Caco-2 (cell line): ENCODE measurements at regions of chr7 and their contacts with region 1.

Region 1: GRCh38 chr7:17559388-17559787 is 260.9 kb downstream of the AHR start:
- DNase-seq: no peak
- H3K4me3 ChIP-seq: no peak overlapping the region
- H3K4me3 Mint-ChIP-seq: peak overlapping the region; percentile 6
- H3K27ac Mint-ChIP-seq: peak overlapping the region; percentile 67
- H3K4me1 ChIP-seq: peaks cover 23% of the 10 kb centered on the region
- H3K4me1 Mint-ChIP-seq: peaks cover 24% of the 10 kb centered on the region
- H3K27me3 ChIP-seq: no peaks in the 10 kb centered on the region
- H3K27me3 Mint-ChIP-seq: no peaks in the 10 kb centered on the region
- CTCF ChIP-seq: no peak

Region 2: GRCh38 chr7:17548014-17548653 is 11.3 kb before region 1 on chr7:
- CTCF ChIA-PET with region 1: no interaction called
- POLR2A ChIA-PET with region 1: no interaction called
- intact Hi-C with region 1: loop called (anchors 1 kb)
- DNase-seq: peak in 1 of 2 experiments; percentile 22
- H3K4me3 ChIP-seq: no peak overlapping the region
- H3K4me3 Mint-ChIP-seq: no peak overlapping the region
- H3K27ac Mint-ChIP-seq: no peak overlapping the region
- H3K4me1 ChIP-seq: 0 out of 2 replicates have a peak, but pooled peaks cover under 1% of the 10 kb centered on the region
- H3K4me1 Mint-ChIP-seq: peaks cover 12% of the 10 kb centered on the region
- H3K27me3 ChIP-seq: no peaks in the 10 kb centered on the region
- H3K27me3 Mint-ChIP-seq: no peaks in the 10 kb centered on the region
- CTCF ChIP-seq: peak; percentile 7 to 43

Region 3: DNA sequence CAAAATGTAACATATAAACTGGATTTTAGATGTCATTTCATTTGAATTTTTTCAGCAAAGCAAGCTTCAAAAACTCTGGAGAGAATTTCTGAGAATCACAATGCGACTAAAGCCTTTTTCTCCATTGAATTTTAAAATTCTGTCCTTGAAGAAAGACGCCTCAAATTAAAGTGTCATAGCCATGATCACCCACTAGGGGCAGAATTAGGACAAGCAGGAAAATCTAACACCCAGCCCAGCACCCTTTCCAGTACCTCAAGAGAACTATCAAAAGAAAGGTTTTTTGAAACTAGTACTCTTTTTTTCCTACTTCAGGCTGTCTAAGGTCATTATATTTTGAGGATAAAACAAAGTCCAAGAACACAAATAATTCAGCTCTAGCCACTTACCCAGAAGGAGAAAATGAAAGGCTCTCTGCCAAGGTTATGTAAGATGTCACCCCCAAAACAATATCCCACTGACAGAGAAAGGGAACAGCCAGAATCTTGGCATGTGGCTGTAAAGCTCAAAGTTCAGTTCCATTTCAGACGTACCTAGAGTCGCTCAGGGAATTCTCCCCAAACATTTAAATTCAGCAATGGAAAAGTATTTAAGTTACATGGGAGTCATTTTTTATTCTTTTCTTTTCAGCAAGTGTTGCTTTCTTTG is 81.5 kb after region 1 on chr7:
- CTCF ChIA-PET with region 1: no interaction called
- POLR2A ChIA-PET with region 1: no interaction called
- intact Hi-C with region 1: loop called (anchors 1 kb)
- DNase-seq: peak in 1 of 2 experiments; percentile 50
- H3K4me3 ChIP-seq: no peak overlapping the region
- H3K4me3 Mint-ChIP-seq: no peak overlapping the region
- H3K27ac Mint-ChIP-seq: no peak overlapping the region
- H3K4me1 ChIP-seq: peaks cover 28% of the 10 kb centered on the region
- H3K4me1 Mint-ChIP-seq: peaks cover 31% of the 10 kb centered on the region
- H3K27me3 ChIP-seq: no peaks in the 10 kb centered on the region
- H3K27me3 Mint-ChIP-seq: no peaks in the 10 kb centered on the region
- CTCF ChIP-seq: peak; percentile 53 to 80